ENCODE measurements at regions of chr14 and their contacts with region 1.

Region 1: GRCh38 chr14:23186913-23187654 is 3.6 kb upstream of the SLC7A8 start:
- DNase-seq: no peak
- H3K4me3 ChIP-seq: no peak overlapping the region
- H3K27ac ChIP-seq: no peak overlapping the region
- H3K4me1 ChIP-seq: peaks cover 0 to 14% (median 10%) of the 10 kb centered on the region in 4 donors
- H3K27me3 ChIP-seq: no peaks in the 10 kb centered on the region
- CTCF ChIP-seq: peak; percentile 82 to 95 (median 83)
- EP300 ChIP-seq: no peak
- POLR2A ChIP-seq: no peak

Region 2: DNA sequence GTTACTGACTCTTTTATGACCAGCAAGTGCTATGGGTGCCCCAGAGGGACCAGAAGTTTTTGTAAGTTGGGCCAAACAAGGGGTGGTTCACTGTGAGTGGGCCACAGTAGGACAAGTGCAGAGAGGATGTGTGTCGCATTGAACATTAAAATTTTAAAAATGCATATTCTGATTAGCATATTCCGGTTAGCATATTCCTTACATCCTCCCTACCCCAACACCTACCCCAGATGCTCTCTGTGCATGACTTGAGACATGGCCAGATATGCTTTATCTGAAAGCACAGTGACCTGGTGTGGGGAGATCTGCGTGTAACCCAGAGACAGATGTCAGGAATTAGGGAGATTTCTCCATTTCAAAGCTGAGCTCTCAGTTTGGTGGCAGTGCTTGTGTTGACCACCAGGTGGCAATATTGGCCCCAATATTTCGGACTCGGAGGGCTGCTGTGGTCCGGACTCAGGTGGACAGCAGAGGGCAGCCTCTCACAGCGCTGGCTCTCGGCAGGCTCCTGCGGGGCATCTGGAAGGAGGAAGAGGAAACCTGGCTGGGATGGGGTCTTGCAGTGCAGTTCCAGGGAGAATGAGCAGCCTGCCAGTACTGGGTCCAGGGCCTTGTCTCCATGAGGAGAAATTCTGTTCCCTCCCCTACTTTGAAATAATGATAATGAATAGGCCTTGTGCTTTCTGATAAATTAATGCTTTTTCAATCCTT is 66.4 kb before region 1 on chr14:
- intact Hi-C with region 1: loop called (anchors 1 kb)
- DNase-seq: peak; percentile 97
- H3K4me3 ChIP-seq: no peak overlapping the region
- H3K27ac ChIP-seq: peak overlapping the region in 1 of 4 donors; percentile 48
- H3K4me1 ChIP-seq: peaks cover 14 to 22% (median 20%) of the 10 kb centered on the region in 4 donors
- H3K27me3 ChIP-seq: peaks cover 0 to 25% (median 0%) of the 10 kb centered on the region in 4 donors
- CTCF ChIP-seq: peak; percentile 100
- EP300 ChIP-seq: no peak
- POLR2A ChIP-seq: no peak

Measured in esophagus muscularis mucosa (tissue), 4 donors.